Caco-2 (cell line): ENCODE measurements at regions of chr20 and their contacts with region 1.

Region 1: DNA sequence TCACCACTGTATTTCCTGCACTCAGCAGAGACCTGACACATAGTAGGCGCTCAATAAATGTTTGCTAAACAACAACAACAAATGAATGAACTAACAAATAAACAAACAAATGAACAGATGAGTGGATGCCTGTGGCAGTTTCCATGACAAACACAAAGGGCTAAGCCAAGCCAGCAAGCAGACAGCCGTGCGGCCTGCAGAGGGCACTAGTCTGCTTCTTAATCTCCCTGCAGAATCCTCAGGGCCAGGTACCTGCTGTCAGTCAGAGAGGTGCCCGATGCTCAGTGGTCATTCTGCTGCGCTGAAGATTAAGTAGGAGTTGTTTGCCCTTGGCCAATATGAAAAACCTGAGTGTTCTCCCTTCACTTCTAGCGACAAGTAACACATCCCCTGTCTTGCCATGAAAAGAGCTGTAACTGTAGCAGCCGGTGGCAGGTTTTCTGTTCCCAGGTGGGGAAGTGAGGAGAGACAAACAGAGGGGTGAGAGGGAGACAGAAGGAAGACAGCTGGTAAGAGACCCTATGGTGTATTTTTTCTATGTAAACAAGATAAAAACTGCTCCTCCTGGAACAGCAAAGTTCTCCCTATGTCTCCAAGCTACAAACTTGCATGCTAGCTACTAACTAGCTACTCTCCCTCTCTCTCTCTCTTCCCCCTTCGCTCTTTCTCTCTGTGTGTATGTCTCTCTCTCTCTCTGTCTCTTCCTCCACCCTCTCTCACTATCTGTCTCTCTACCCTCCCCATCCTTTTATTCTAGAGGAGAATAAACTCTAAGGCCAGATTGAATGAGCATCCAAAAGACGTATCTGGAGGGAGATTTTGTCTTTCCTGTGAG is at the start of gene MC3R:
- DNase-seq: peak; percentile 86
- H3K4me3 ChIP-seq: no peak within 1 kb of the TSS
- H3K4me3 Mint-ChIP-seq: no peak within 1 kb of the TSS
- H3K27ac Mint-ChIP-seq: no peak within 1 kb of the TSS
- H3K4me1 ChIP-seq: no peaks in the 10 kb centered on the region
- H3K4me1 Mint-ChIP-seq: no peaks in the 10 kb centered on the region
- H3K27me3 ChIP-seq: no peaks in the 10 kb centered on the region
- H3K27me3 Mint-ChIP-seq: peaks cover 33% of the 10 kb centered on the region
- CTCF ChIP-seq: peak; percentile 92 to 99
- total RNA-seq, gene MC3R: not detected in 2 replicates

Region 2: GRCh38 chr20:56222196-56222595 is 26.0 kb before region 1 on chr20:
- CTCF ChIA-PET with region 1: no interaction called
- POLR2A ChIA-PET with region 1: no interaction called
- intact Hi-C with region 1: no loop called
- DNase-seq: no peak
- H3K4me3 ChIP-seq: no peak overlapping the region
- H3K4me3 Mint-ChIP-seq: no peak overlapping the region
- H3K27ac Mint-ChIP-seq: no peak overlapping the region
- H3K4me1 ChIP-seq: no peaks in the 10 kb centered on the region
- H3K4me1 Mint-ChIP-seq: no peaks in the 10 kb centered on the region
- H3K27me3 ChIP-seq: no peaks in the 10 kb centered on the region
- H3K27me3 Mint-ChIP-seq: no peaks in the 10 kb centered on the region
- CTCF ChIP-seq: no peak

Region 3: DNA sequence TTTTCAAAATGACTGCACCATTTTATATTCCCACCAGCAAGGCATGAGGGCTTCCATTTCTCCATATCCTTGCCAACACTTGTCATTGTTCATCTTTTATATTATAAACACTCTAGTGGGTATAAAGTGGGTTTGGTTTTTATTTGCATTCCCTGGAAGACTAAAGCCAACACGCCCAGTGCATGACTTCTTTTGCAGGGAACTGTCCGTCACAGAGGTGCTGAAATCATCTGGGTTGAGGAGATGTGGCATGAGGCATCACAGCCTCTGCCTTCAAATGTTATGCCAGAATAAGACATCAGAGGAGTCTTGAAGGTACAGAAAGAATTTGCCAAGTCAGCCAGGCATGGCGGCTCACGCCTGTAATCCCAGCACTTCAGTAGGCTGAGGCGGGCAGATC is 80.7 kb after region 1 on chr20:
- CTCF ChIA-PET with region 1: no interaction called
- POLR2A ChIA-PET with region 1: no interaction called
- intact Hi-C with region 1: no loop called
- DNase-seq: peak in 1 of 2 experiments; percentile 75
- H3K4me3 ChIP-seq: no peak overlapping the region
- H3K4me3 Mint-ChIP-seq: no peak overlapping the region
- H3K27ac Mint-ChIP-seq: no peak overlapping the region
- H3K4me1 ChIP-seq: no peaks in the 10 kb centered on the region
- H3K4me1 Mint-ChIP-seq: no peaks in the 10 kb centered on the region
- H3K27me3 ChIP-seq: no peaks in the 10 kb centered on the region; the same call in 1 of the 2 replicates
- H3K27me3 Mint-ChIP-seq: peaks cover 5% of the 10 kb centered on the region
- CTCF ChIP-seq: no peak

Region 4: DNA sequence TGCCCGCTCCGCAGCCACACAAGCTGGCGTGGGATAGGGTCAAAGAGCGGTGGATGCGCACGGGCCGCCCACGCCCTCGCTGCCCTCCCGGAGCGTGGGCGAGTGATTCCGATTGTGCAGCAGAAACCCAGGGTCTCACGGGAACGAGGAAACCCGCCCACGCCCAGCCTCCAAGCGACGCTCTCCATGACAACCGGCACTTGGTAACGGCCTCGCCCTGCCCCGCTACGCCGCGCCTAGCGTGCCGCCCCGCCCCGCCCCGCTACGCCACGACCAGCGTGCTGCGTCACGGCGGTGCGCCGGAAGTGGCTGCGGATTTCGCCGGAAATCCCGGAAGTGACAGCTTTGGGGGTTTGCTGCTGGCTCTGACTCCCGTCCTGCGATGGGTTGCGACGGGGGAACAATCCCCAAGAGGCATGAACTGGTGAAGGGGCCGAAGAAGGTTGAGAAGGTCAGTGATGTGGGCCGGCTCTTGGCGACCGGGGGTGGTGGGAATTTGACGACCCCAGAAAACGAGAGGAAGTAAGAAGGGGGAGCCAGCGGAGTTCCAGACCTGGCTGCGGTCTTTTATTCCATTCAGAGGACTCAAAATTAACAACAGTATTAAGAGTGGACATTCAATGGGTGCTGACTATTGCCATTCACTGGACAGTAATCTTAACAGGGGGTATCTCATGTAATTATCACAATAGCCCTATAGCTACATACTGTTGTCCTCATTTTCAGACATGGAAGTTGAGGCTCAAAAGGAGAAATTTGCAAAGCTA is 220.3 kb after region 1 on chr20 and contains the start of gene RTF2:
- CTCF ChIA-PET with region 1: no interaction called
- POLR2A ChIA-PET with region 1: no interaction called
- intact Hi-C with region 1: loop called (anchors 1 kb)
- DNase-seq: peak; percentile 96 to 99
- H3K4me3 ChIP-seq: peak within 1 kb of the TSS; percentile 67
- H3K4me3 Mint-ChIP-seq: peak within 1 kb of the TSS; percentile 100
- H3K27ac Mint-ChIP-seq: peak within 1 kb of the TSS; percentile 100
- H3K4me1 ChIP-seq: no peaks in the 10 kb centered on the region; the same call in 1 of the 2 replicates
- H3K4me1 Mint-ChIP-seq: peaks cover 10% of the 10 kb centered on the region
- H3K27me3 ChIP-seq: no peaks in the 10 kb centered on the region
- H3K27me3 Mint-ChIP-seq: peaks cover 3% of the 10 kb centered on the region
- CTCF ChIP-seq: no peak
- total RNA-seq, gene RTF2: 146 and 157 TPM in 2 replicates

Region 5: DNA sequence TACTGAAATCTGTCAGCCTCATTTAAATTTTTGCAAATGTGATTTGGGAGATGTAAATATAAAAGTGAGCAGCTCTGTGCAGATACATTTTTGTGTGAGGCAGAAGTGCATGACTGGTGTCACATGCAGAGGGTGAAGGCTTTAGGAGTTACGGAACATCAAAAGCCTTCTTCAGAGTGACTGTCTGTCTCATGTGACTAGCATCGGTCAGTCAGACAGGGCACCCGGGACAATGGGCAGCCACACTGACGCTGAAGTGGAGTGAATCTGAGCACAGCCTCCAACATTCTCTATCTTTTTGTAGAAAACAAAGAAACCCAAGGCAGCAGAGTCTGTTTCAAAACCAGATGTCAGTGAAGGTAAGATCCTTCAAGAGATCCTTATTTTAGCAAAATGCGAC is 268.5 kb after region 1 on chr20:
- CTCF ChIA-PET with region 1: no interaction called
- POLR2A ChIA-PET with region 1: no interaction called
- intact Hi-C with region 1: loop called (anchors 1 kb)
- DNase-seq: no peak
- H3K4me3 ChIP-seq: no peak overlapping the region
- H3K4me3 Mint-ChIP-seq: no peak overlapping the region
- H3K27ac Mint-ChIP-seq: no peak overlapping the region
- H3K4me1 ChIP-seq: no peaks in the 10 kb centered on the region
- H3K4me1 Mint-ChIP-seq: no peaks in the 10 kb centered on the region
- H3K27me3 ChIP-seq: no peaks in the 10 kb centered on the region
- H3K27me3 Mint-ChIP-seq: no peaks in the 10 kb centered on the region
- CTCF ChIP-seq: no peak